A673 (cell line): ENCODE measurements at regions of chr11 and their contacts with region 1.

Region 1: GRCh38 chr11:103202048-103202651 is 92.9 kb downstream of the DYNC2H1 start:
- DNase-seq: peak; percentile 70
- H3K4me3 ChIP-seq: no peak overlapping the region
- H3K27ac ChIP-seq: no peak overlapping the region
- H3K4me1 ChIP-seq: no peaks in the 10 kb centered on the region
- H3K27me3 ChIP-seq: no peaks in the 10 kb centered on the region
- CTCF ChIP-seq: peak; percentile 88

Region 2: DNA sequence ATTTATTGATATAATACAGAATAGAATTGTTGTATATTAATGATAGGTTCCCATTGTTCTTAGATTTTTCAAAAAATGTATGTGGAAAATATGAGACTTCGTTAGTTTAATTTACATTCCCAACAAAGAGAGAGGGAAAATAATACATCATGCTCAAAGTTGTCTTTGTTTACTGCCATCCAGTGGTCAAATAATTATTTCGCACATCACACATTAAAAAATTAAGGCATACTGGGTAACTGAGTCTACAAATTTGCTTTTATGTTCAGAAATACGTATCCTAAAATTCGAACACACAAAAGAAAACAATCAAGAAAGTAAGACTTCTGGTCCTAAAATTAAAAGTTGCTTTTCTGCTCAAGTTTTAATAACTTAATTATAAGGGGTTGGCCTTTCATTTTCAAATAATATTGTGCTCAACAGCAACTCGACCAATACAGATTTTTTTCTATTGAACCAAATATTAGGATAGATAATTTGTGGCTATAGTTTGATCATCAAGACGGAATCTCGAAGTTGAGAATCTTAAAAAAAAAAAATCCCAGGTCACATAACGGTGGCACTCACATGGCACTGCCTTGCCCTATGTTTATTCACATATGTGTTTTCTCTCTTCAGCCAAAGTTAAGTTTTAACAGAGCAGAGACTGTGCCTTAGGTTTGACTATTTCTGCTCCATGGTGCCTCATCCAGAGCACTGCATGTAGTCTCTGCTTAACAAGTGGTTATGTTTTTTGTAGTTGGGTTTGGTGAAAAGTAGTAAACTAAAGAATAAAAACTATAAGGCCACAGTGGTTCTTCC is 949.5 kb after region 1 on chr11:
- CTCF ChIA-PET with region 1: no interaction called
- POLR2A ChIA-PET with region 1: no interaction called
- intact Hi-C with region 1: loop called (anchors 10 kb)
- DNase-seq: peak; percentile 58
- H3K4me3 ChIP-seq: no peak overlapping the region
- H3K27ac ChIP-seq: no peak overlapping the region
- H3K4me1 ChIP-seq: peaks cover 29% of the 10 kb centered on the region
- H3K27me3 ChIP-seq: no peaks in the 10 kb centered on the region
- CTCF ChIP-seq: peak; percentile 73